ENCODE measurements at regions of chr19 and their contacts with region 1.

Region 1: GRCh38 chr19:44653977-44654774 is 10.5 kb downstream of the PVR start:
- DNase-seq: peak; percentile 84 to 94 (median 94)
- H3K4me3 ChIP-seq: no peak overlapping the region
- H3K27ac ChIP-seq: no peak overlapping the region
- H3K4me1 ChIP-seq: peaks cover 0 to 5% (median 2%) of the 10 kb centered on the region in 4 experiments
- H3K27me3 ChIP-seq: no peaks in the 10 kb centered on the region

Region 2: DNA sequence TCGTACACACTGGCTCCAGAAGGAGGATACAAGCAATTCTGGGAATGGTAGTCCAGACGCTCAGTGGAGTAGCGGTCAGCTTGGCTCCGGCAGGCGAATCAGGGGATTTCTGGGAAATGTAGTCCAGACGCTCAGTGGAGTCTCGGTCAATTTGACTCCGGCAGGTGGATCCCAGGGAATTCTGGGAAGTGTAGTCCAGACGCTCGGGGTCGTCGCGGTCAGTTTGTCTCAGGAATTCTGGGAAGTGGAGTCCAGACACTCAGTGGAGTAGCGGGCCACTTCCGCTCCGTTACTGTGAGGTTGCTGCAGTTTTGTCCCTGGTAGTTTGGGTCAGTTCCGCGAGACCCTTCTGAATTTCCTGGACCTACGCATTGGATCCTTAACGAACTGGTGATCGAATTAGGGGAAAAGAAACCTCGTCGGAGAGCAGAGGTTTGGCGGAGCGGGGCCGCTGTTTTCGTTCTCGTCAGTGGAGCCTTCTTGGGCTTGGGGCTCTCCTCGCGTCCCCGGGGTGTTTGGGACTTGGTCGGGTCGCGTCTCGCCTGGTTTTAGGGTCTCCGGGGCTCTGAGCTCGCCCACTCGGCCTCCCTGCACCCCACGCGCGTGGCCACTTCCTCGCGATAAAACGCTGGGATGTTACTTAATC is 540.9 kb before region 1 on chr19 and contains the start of gene ZNF225:
- CTCF ChIA-PET with region 1: no interaction called
- POLR2A ChIA-PET with region 1: no interaction called
- DNase-seq: peak; percentile 94 to 95 (median 95)
- H3K4me3 ChIP-seq: peak within 1 kb of the TSS; percentile 73 to 98 (median 92)
- H3K27ac ChIP-seq: peak within 1 kb of the TSS; percentile 54 to 80
- H3K4me1 ChIP-seq: peaks cover 0 to 19% (median 12%) of the 10 kb centered on the region in 4 experiments
- H3K27me3 ChIP-seq: no peaks in the 10 kb centered on the region

Region 3: DNA sequence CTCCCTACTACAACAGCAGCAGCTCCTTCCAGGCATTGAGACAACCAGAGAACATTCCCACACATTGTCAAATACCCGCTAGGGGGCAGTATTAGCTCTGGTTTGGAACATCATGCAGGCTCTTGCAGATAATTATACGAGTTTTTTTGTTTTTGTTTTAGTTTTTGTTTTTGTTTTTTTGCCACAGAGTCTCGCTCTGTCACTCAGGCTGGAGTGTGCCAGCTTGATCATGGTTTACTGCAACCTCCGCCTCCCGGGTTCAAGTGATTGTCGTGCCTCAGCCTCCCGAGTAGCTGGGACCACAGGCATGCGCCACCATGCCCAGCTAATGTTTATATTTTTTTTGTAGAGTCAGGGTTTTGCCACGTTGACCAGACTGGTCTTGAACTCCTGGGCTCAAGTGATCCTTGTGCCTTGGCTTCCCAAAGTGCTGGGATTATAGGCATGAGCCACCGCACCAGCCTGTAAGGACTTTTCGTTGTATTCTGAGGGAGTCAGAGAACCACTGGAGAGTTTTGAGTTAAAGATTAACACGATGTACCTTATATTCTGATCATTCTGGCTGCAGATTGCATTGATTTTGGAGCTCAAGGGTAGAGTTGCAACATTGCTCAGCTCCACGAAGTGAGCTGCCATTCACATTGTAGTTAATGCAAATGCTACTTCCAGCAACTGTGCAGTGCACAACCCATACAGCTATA is 83.0 kb before region 1 on chr19:
- CTCF ChIA-PET with region 1: interaction called, 73 read pairs
- POLR2A ChIA-PET with region 1: interaction called, 4 read pairs
- DNase-seq: peak; percentile 74 to 88 (median 81)
- H3K4me3 ChIP-seq: no peak overlapping the region
- H3K27ac ChIP-seq: no peak overlapping the region
- H3K4me1 ChIP-seq: no peaks in the 10 kb centered on the region
- H3K27me3 ChIP-seq: peaks cover 0 to 5% (median 0%) of the 10 kb centered on the region in 5 experiments

Region 4: DNA sequence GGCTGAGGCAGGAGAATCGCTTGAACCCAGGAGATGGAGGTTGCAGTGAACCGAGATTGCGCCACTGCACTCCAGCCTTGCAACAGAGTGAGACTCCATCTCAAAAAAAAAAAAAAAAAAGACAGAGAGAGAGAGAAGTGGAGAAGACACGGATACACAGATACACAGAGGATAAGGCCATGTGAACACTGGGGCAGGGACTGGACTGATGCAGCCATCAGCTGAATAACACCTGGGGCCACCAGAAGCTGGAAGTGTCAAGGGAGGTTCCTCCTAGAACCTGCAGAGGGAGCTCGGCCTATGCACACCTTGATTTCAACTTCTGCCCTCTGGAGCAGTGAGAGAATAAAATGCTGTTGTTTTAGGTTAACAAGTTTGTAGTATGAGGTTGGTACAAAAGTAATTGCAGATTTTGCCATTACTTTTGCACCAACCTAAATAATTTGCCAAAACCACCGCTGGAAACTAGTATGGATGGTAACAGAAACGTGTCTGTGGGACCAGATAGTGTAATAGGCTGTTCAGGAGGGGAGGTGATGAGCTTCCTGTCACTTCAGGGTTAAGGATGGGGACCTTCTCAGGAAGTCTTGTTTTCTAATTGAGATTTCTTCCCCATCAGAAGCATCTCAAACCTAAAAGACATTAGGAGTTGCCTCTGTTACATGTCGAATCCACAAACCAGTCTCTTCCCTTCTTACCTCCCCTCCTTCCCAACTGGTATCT is 77.2 kb before region 1 on chr19:
- CTCF ChIA-PET with region 1: interaction called, 73 read pairs
- POLR2A ChIA-PET with region 1: no interaction called
- DNase-seq: peak; percentile 38 to 74 (median 68)
- H3K4me3 ChIP-seq: no peak overlapping the region
- H3K27ac ChIP-seq: no peak overlapping the region
- H3K4me1 ChIP-seq: no peaks in the 10 kb centered on the region
- H3K27me3 ChIP-seq: no peaks in the 10 kb centered on the region

Region 5: DNA sequence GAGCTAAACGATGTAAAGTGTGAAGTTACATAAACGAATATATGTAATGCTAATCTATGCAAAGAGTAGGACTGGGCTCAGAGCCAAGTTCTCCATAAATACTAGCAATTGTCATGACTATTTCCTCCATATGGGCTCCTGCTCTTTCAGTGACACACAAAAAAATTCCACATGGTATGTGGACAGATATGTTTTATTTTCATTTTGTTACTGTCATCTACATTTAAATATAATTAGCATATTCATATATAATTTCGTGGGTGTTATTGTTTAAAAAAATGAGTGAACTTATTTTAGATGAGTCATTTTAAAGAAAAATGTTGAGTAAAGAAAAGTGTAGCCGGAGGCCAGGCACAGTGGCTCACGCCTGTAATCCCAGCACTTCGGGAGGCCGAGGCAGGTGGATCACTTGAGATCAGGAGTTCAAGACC is 45.8 kb before region 1 on chr19:
- CTCF ChIA-PET with region 1: interaction called, 25 read pairs
- POLR2A ChIA-PET with region 1: no interaction called
- DNase-seq: peak; percentile 19 to 51 (median 42)
- H3K4me3 ChIP-seq: no peak overlapping the region
- H3K27ac ChIP-seq: no peak overlapping the region
- H3K4me1 ChIP-seq: peaks cover 8 to 19% (median 17%) of the 10 kb centered on the region in 4 experiments
- H3K27me3 ChIP-seq: no peaks in the 10 kb centered on the region